MCF 10A (cell line): ENCODE measurements at regions of chr10 and their contacts with region 1.

Region 1: DNA sequence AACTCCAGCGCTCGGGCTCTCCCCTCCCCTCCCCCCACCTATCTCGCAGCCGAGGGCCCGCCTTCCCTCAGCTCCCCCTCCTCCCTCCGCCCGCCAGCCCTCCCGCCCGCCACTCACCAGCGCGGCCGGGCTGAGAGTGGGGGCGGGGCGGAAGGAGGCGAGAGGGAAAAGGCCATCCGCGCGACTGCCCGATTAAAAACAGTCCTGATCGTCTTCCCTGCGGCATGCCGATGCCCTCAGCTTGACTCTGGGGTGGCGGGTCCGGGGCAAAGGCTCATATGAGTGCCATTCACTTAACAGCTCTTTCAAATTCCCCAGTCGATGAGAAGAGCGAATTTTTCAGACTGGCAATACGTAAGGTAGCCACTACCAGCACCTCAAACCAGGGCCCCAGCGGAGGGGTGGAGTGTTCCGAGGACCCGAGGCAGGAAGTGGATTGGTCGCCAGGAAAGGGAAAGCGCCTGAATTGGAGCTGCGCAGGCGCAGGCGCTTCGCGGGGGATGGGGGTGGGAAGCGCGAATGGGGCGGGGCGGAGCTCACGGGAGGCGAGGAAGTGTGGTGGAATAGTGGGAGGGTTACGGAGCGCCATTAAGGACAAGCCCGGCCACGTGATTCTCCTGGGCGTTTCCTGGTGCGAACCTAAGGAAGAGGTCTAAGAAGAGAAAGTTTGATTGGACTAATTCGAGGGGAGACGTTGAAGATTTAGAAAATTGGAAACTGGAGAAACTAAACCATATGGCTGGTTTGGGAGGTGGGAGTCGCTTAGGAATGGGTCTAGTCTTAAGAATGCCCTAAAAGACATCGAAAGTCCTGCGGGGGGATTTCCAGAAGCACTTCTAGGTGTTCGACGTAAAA is at the start of gene UPF2:
- DNase-seq: peak; percentile 98
- H3K4me3 Mint-ChIP-seq: peak within 1 kb of the TSS; percentile 97
- H3K27ac Mint-ChIP-seq: peak within 1 kb of the TSS; percentile 100
- H3K4me1 Mint-ChIP-seq: peaks cover 12% of the 10 kb centered on the region
- H3K27me3 Mint-ChIP-seq: no peaks in the 10 kb centered on the region
- CTCF ChIP-seq: no peak
- total RNA-seq, gene UPF2: 24.3 and 24.7 TPM in 2 replicates

Region 2: DNA sequence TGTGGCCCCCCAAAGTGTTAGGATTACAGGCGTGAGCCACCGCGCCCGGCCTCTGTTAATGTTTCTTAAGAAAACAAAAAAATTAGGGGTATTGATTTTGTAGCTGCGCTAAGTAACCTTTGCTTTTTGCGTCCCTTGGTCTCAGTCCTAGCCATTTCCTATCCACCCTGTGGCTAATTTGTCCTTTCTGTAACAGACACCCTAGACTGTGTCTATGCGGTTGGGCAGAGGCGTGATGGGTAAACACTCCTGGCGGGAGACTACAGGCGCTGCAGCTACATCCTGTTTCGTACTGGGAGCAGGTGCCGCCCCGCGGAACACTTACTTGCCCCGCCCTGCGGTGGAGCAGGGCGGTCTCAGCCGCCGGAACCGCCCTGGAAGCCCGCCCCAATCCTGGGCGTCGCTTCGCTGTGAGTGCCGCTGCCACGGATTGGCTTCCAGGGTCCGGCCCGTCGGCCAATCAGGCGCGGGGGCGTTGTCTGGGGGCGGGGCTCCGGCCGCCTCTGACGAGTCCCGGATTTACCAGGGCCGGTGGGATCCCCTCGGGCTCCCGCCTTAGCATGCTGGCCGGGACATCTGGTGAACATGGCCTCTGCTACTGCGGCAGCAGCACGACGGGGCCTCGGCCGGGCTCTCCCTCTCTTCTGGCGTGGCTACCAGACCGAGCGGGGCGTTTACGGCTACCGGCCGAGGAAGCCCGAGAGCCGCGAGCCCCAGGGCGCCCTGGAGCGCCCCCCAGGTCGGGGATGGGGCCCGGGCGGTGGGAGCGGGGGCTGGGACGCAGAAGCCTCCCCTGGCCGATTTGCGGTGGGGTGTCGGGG is 25.6 kb after region 1 on chr10 and contains the start of gene DHTKD1:
- CTCF ChIA-PET with region 1: interaction called, 4 read pairs
- POLR2A ChIA-PET with region 1: interaction called, 34 read pairs
- intact Hi-C with region 1: loop called (anchors 1 kb)
- DNase-seq: peak; percentile 98
- H3K4me3 Mint-ChIP-seq: peak within 1 kb of the TSS; percentile 70
- H3K27ac Mint-ChIP-seq: peak within 1 kb of the TSS; percentile 87
- H3K4me1 Mint-ChIP-seq: peaks cover 20% of the 10 kb centered on the region
- H3K27me3 Mint-ChIP-seq: no peaks in the 10 kb centered on the region
- CTCF ChIP-seq: peak; percentile 23
- total RNA-seq, gene DHTKD1: 16.0 and 17.3 TPM in 2 replicates

Region 3: DNA sequence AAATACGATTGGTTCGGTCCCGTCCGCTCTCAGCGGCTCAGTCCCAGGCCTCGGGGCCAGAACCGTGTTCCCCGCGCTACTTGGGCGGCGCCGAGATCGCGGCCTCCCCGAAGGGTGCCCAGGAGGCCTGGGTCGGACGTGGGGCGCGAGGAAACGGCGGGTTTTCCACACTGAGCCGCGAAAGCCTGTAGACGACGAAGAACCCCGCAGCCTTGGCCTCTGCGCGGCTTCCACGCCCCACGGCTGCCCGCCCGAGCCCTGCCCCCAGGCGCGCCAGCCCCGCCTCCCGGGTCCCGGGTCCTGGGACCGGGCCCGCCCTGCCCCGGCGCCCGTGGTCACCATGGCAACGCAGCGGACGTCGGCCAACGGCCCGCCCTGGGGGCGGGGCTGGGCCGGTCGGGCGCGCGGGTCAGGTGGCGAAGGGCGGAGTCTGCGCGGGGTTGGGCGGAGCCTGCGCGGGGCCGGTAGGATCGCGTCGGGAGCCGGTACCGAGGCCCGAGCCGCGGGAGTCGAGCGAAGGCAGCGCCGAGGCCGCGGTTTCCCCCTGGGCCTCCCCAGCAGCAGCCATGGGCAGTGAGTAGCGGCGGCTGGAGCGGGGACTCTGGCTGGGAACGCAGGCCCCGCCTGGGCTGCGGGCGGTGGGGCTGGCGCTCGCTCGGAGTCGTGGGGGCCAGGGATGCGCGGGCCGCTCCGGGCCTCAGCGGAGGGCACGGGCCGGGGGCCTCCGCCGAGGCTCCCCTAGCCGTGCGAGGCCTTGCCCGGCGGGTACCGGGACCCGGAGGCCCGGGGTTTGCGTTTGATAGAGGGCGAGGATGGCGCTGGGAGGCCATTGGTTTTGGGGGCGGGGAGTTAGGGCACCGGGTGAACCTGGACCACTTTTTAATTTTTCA is 86.4 kb after region 1 on chr10 and contains the start of gene SEC61A2:
- CTCF ChIA-PET with region 1: no interaction called
- POLR2A ChIA-PET with region 1: interaction called, 29 read pairs
- intact Hi-C with region 1: loop called (anchors 2 kb)
- DNase-seq: peak; percentile 90
- H3K4me3 Mint-ChIP-seq: peak within 1 kb of the TSS; percentile 68
- H3K27ac Mint-ChIP-seq: peak within 1 kb of the TSS; percentile 67
- H3K4me1 Mint-ChIP-seq: peaks cover 12% of the 10 kb centered on the region
- H3K27me3 Mint-ChIP-seq: no peaks in the 10 kb centered on the region
- CTCF ChIP-seq: no peak
- total RNA-seq, gene SEC61A2: 11.4 and 17.4 TPM in 2 replicates